CD8-positive, alpha-beta T cell (primary cell): ENCODE measurements at regions of chr13 and their contacts with region 1.

Region 1: GRCh38 chr13:40388617-40389016 is 277.8 kb downstream of the FOXO1 start:
- DNase-seq: peak; percentile 65 to 95 (median 85)
- ATAC-seq: peak; percentile 90
- H3K4me3 ChIP-seq: peak overlapping the region; percentile 48 to 53
- H3K4me3 Mint-ChIP-seq: peak overlapping the region; percentile 88
- H3K27ac ChIP-seq: peak overlapping the region; percentile 91 to 99
- H3K27ac Mint-ChIP-seq: peak overlapping the region; percentile 98
- H3K4me1 ChIP-seq: peaks cover 29% of the 10 kb centered on the region
- H3K4me1 Mint-ChIP-seq: peaks cover 73% of the 10 kb centered on the region
- H3K27me3 ChIP-seq: no peaks in the 10 kb centered on the region
- H3K27me3 Mint-ChIP-seq: no peaks in the 10 kb centered on the region
- CTCF ChIP-seq: no peak

Region 2: DNA sequence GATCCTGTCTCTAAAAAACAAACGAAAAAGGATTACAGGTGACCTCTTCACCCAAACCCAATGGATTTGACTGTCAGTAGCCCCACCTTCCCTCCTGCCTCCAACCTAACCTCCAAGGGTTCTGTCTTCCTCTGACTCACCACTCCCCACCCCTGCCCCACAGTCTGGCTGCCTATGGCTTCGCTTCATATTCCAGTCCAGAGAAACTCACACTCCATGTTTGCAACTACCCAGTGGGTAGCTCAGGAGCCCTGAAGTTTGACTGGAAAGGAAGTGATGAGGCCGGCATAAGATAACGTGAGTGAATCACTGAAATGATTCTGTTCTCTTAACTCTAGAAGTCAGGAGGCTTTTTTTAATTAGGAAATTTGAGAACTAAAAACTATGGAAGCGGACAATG is 26.1 kb before region 1 on chr13:
- CTCF ChIA-PET with region 1: no interaction called
- POLR2A ChIA-PET with region 1: no interaction called
- intact Hi-C with region 1: no loop called
- DNase-seq: no peak
- ATAC-seq: no peak
- H3K4me3 ChIP-seq: no peak overlapping the region
- H3K4me3 Mint-ChIP-seq: no peak overlapping the region
- H3K27ac ChIP-seq: no peak overlapping the region
- H3K27ac Mint-ChIP-seq: no peak overlapping the region
- H3K4me1 ChIP-seq: no peaks in the 10 kb centered on the region
- H3K4me1 Mint-ChIP-seq: peaks cover 8% of the 10 kb centered on the region
- H3K27me3 ChIP-seq: no peaks in the 10 kb centered on the region
- H3K27me3 Mint-ChIP-seq: no peaks in the 10 kb centered on the region
- CTCF ChIP-seq: no peak

Region 3: GRCh38 chr13:40440990-40441820 is 52.6 kb after region 1 on chr13:
- CTCF ChIA-PET with region 1: no interaction called
- POLR2A ChIA-PET with region 1: no interaction called
- intact Hi-C with region 1: loop called in 1 of 2 experiments (anchors 5 kb)
- DNase-seq: no peak
- ATAC-seq: no peak
- H3K4me3 ChIP-seq: no peak overlapping the region
- H3K4me3 Mint-ChIP-seq: no peak overlapping the region
- H3K27ac ChIP-seq: no peak overlapping the region
- H3K27ac Mint-ChIP-seq: no peak overlapping the region
- H3K4me1 ChIP-seq: peaks cover 23% of the 10 kb centered on the region
- H3K4me1 Mint-ChIP-seq: peaks cover 30% of the 10 kb centered on the region
- H3K27me3 ChIP-seq: no peaks in the 10 kb centered on the region
- H3K27me3 Mint-ChIP-seq: no peaks in the 10 kb centered on the region
- CTCF ChIP-seq: no peak

Region 4: GRCh38 chr13:40770934-40771618 is 382.5 kb after region 1 on chr13 and contains the start of gene MRPS31:
- CTCF ChIA-PET with region 1: no interaction called
- POLR2A ChIA-PET with region 1: no interaction called
- intact Hi-C with region 1: no loop called
- DNase-seq: peak; percentile 88 to 98 (median 95)
- ATAC-seq: peak; percentile 94
- H3K4me3 ChIP-seq: peak within 1 kb of the TSS; percentile 89 to 92
- H3K4me3 Mint-ChIP-seq: peak within 1 kb of the TSS; percentile 99
- H3K27ac ChIP-seq: peak within 1 kb of the TSS; percentile 74 to 87
- H3K27ac Mint-ChIP-seq: peak within 1 kb of the TSS; percentile 98
- H3K4me1 ChIP-seq: peaks cover 20% of the 10 kb centered on the region
- H3K4me1 Mint-ChIP-seq: peaks cover 41% of the 10 kb centered on the region
- H3K27me3 ChIP-seq: no peaks in the 10 kb centered on the region
- H3K27me3 Mint-ChIP-seq: no peaks in the 10 kb centered on the region
- CTCF ChIP-seq: no peak
- total RNA-seq, gene MRPS31: 7.3 to 7.5 TPM